HEK293 (cell line): ENCODE measurements at regions of chrX and their contacts with region 1.

Region 1: DNA sequence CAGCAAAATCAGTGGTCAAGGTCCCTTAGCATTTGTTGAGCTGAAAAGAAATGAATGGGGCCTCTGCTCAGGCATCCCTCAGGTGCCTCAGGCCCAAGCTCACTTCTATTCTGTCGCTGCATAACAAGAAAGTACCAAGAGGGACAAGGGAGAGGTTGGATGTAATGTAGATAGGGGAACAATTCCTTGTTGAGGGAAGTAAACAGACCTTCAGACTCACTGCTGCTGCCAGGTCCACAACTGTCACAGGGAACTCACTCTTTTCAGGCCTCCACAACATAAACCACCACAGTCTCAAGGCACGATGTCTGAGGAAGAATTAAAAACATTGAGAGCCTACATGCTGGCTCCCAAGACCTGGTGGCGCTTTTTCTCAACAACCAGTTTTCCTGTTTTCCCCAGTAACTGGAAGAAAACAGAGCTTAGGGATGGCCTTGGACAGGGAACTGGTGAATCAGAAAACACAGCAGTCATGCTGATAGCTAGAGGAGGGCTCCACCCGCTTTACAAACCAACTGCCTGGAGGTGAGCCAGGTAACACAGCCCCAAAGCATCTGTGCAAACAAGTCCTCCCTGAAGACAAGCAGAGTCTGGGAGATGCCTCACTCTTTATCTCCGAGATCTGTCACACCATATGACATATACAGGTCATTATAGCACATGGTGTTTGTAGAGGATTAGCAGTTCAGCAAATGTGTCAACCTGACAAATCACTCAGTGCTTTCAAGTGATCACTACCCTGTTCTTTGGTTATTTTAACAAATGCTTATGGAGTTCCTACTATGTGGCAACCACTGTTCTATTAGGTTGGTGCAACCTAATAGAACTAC is 14.3 kb upstream of the AWAT1 start:
- H3K4me3 ChIP-seq: no peak overlapping the region
- H3K27ac ChIP-seq: no peak overlapping the region; the same call in 1 of the 2 replicates
- H3K4me1 ChIP-seq: no peaks in the 10 kb centered on the region
- CTCF ChIP-seq: no peak

Region 2: GRCh38 chrX:70231666-70232065 is 11.5 kb after region 1 on chrX:
- CTCF ChIA-PET with region 1: interaction called, 10 read pairs
- POLR2A ChIA-PET with region 1: no interaction called
- H3K4me3 ChIP-seq: no peak overlapping the region
- H3K27ac ChIP-seq: no peak overlapping the region
- H3K4me1 ChIP-seq: no peaks in the 10 kb centered on the region
- CTCF ChIP-seq: no peak